Mammary epithelial cell (primary cell): ENCODE measurements at regions of chr4 and their contacts with region 1.

Region 1: DNA sequence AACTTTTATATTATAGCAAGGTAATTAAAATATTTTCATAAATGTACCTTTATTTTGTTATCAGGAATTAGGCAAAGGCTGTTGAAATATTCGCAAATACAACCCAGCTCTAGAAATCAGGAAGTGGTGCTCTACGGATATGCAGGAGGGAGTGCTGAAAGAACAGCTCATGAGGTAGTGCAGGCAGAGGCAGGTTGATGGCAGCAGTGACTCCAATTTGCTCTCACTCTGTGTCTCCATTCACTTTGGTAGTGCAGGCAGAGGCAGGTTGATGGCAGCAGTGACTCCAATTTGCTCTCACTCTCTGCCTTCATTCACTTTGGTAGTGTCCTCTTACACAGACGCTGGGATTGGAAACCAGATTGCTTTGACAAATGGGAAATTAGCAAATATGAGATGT is 277.9 kb downstream of the TRIML1 start:
- DNase-seq: no peak
- H3K4me3 ChIP-seq: no peak overlapping the region
- H3K27ac ChIP-seq: no peak overlapping the region
- H3K4me1 ChIP-seq: peaks cover 8% of the 10 kb centered on the region
- H3K27me3 ChIP-seq: no peaks in the 10 kb centered on the region
- CTCF ChIP-seq: peak in 1 of 2 donors; percentile 27

Region 2: DNA sequence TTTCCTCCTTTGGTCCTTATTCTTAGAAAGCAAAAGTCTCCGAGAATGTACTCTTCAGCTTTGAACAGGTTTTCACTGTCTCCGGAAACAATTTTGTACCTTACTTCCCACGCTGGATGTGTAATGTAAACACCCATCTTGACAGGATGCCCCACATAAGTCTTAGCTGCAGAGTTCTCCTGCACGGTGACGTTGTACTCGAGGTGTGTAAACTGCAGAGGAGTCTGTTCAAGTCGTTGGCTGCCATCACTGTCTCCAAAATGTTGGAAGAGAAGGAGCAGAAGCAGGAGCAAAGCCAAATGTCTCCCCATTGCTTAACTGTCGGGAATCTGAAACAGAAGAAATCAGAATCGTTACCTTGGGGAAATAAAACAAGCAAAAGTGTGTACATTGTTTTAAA is 1707.7 kb before region 1 on chr4:
- CTCF ChIA-PET with region 1: interaction called, 13 read pairs
- dilution Hi-C with region 1: no loop called
- in situ Hi-C with region 1: no loop called
- intact Hi-C with region 1: no loop called
- DNase-seq: no peak
- H3K4me3 ChIP-seq: no peak overlapping the region
- H3K27ac ChIP-seq: no peak overlapping the region
- H3K4me1 ChIP-seq: peaks cover 17% of the 10 kb centered on the region
- H3K27me3 ChIP-seq: no peaks in the 10 kb centered on the region
- CTCF ChIP-seq: no peak